Astrocyte of the cerebellum (primary cell): ENCODE measurements at regions of chr12 and their contacts with region 1.

Region 1: DNA sequence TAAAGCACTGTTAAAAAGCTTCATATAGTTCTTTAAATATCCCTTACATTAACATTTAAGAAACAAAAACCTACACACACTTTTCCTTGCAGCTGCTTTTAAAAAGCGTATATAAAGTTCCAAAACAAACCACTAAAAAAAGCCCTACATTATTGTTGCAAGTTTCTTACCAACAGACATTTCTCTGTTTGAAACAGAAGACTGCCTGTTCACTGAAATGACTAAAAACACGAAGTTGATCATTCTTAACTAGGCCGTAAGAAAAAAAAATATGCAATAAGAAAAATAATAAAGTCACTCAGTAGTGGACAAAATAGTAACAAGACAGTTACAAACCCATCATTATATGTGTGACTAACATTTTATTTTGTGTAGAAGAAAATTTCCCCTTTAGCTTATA is 37.3 kb downstream of the KIF21A start:
- DNase-seq: no peak
- H3K4me3 ChIP-seq: no peak overlapping the region
- CTCF ChIP-seq: no peak

Region 2: DNA sequence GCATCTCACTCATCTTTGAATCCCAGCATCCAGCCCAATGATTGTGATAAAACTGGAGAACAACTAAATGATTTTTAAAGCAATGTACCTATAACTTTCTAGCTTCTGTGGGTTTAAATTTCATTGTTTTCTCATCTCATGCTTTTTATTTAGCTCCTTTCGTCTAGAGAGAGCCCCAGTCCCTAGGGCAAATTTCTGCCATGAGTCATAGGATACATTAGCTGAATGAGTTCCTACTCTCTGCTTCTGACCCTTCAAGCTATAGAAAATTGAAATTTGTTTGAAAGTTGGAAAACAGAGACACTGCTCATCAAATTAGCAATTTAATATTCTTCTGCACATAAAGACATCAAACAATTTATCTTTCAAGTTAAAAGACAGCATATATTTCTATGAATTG is 76.6 kb before region 1 on chr12:
- in situ Hi-C with region 1: no loop called
- DNase-seq: no peak
- H3K4me3 ChIP-seq: no peak overlapping the region
- CTCF ChIP-seq: no peak

Region 3: GRCh38 chr12:39354955-39355354 is 50.6 kb before region 1 on chr12:
- in situ Hi-C with region 1: loop called (anchors 5 kb)
- DNase-seq: no peak
- H3K4me3 ChIP-seq: no peak overlapping the region
- CTCF ChIP-seq: no peak

Region 4: GRCh38 chr12:39448054-39448453 is 42.5 kb after region 1 on chr12:
- in situ Hi-C with region 1: no loop called
- DNase-seq: no peak
- H3K4me3 ChIP-seq: no peak overlapping the region
- CTCF ChIP-seq: no peak

Region 5: DNA sequence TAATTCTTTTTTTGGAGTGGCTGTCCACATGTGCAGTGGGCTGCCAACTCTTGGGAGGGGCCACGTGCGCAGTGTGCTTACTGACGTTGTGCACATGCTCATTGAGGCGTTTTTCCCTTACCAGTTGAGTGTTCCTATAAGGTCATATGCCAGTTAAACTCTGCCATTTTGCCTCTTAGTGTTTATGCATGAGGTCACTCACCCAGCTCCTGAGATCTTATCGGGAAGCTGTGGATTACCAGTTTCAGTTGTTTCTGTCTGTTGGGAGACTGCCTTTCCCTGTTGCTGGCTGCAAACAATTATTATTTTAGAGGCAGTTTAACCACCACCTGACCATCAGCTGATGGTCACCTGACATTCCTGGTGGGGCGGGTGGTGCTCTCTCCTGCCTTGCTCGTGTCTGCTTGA is 53.5 kb after region 1 on chr12:
- in situ Hi-C with region 1: no loop called
- DNase-seq: no peak
- H3K4me3 ChIP-seq: no peak overlapping the region
- CTCF ChIP-seq: no peak